WTC11 (cell line): ENCODE measurements at regions of chr6 and their contacts with region 1.

Region 1: DNA sequence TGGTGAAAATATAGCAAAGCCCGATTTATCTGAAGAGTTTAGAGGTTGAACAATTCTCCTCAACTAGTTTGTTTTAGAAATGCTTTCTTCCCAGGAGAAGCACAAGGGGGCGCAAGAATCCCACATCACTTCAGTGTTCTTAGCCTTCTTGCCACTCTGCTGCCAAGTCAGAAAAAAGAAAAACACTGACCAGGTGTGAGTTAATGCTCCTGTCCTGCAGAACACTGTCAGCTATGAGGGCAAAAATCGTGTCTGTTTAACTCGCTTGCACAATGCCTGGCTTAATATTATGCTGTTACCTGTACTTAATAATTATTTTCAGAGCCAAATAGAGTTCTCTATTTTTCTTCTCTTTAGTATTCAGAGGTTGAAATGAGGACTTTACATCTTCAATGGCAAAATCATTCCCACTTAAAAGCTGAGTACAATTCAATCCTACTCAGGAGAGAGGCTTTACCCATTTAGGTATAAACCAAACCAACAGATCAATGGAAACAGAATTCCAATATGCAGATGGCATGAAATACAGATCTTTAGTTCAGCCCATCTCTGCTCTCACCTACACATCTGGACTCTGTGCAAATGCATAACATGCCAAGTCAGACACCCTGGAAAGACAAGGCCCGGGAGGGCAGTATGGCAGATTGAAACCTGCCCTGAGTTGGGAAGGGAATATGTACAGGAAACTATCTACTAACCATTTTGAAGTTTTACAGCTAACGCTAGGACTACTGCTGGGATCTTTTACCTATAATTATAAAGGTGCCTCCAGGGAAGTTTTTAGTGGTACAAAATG is 71.4 kb upstream of the TULP1 start:
- DNase-seq: peak; percentile 75
- ATAC-seq: peak; percentile 86
- H3K4me3 Mint-ChIP-seq: no peak overlapping the region
- H3K27ac Mint-ChIP-seq: no peak overlapping the region
- H3K4me1 Mint-ChIP-seq: peaks cover 4% of the 10 kb centered on the region; the same call in 1 of the 2 replicates
- H3K27me3 Mint-ChIP-seq: no peaks in the 10 kb centered on the region
- CTCF ChIP-seq: peak; percentile 73

Region 2: GRCh38 chr6:35544523-35545313 is 39.4 kb before region 1 on chr6:
- CTCF ChIA-PET with region 1: no interaction called
- POLR2A ChIA-PET with region 1: no interaction called
- DNase-seq: no peak
- ATAC-seq: peak; percentile 43
- H3K4me3 Mint-ChIP-seq: no peak overlapping the region
- H3K27ac Mint-ChIP-seq: no peak overlapping the region
- H3K4me1 Mint-ChIP-seq: peaks cover 25% of the 10 kb centered on the region
- H3K27me3 Mint-ChIP-seq: no peaks in the 10 kb centered on the region
- CTCF ChIP-seq: no peak

Region 3: DNA sequence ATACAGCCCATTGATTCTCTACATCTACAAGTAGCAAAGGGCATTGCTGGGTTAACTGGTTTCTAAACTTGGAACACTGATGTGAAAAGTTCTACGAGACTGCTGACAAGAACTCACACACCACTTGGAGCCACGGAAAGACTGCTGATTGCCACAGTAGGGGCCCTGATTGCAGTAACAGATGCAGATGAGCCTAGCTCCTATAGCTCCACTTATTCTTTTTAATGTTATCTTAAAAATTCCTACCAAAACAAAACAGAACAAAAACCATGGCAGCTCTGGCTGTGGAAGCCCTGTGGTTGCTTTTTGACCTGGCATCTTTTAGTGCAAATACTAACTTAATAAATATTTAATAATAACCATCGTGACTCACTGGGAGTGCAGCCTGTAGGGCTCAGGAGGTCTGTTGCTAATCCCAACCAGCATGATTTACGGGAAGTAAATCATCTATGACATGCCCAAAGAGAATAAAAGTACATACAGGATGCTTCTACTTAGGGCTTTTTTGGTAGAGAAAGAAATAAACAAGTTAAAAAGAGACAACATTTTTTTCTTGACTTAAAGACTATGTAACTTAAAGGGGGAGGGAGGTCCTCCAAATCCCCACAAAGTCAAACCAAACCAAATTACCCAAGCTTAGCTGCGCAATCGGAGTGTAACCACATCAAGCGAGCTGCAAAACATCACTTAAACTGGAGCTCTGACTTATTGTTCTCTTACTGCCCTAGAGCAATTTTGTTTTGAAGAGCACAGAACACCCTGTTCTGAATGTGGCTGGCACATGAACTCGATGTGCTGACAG is 17.4 kb after region 1 on chr6:
- CTCF ChIA-PET with region 1: interaction called, 13 read pairs
- POLR2A ChIA-PET with region 1: no interaction called
- DNase-seq: no peak
- ATAC-seq: peak; percentile 78
- H3K4me3 Mint-ChIP-seq: no peak overlapping the region
- H3K27ac Mint-ChIP-seq: peak overlapping the region; percentile 78
- H3K4me1 Mint-ChIP-seq: peaks cover 28% of the 10 kb centered on the region
- H3K27me3 Mint-ChIP-seq: no peaks in the 10 kb centered on the region
- CTCF ChIP-seq: no peak